Right lobe of liver (tissue), 6 donors: ENCODE measurements at regions of chr7 and their contacts with region 1.

Region 1: GRCh38 chr7:87416682-87417587 is 58.5 kb downstream of the ABCB4 start:
- DNase-seq: no peak
- ATAC-seq: peak; percentile 62 to 82 (median 74)
- H3K4me3 ChIP-seq: no peak overlapping the region
- H3K27ac ChIP-seq: no peak overlapping the region
- H3K4me1 ChIP-seq: no peaks in the 10 kb centered on the region
- H3K27me3 ChIP-seq: no peaks in the 10 kb centered on the region
- CTCF ChIP-seq: peak; percentile 61 to 70 (median 67)
- POLR2A ChIP-seq: no peak

Region 2: DNA sequence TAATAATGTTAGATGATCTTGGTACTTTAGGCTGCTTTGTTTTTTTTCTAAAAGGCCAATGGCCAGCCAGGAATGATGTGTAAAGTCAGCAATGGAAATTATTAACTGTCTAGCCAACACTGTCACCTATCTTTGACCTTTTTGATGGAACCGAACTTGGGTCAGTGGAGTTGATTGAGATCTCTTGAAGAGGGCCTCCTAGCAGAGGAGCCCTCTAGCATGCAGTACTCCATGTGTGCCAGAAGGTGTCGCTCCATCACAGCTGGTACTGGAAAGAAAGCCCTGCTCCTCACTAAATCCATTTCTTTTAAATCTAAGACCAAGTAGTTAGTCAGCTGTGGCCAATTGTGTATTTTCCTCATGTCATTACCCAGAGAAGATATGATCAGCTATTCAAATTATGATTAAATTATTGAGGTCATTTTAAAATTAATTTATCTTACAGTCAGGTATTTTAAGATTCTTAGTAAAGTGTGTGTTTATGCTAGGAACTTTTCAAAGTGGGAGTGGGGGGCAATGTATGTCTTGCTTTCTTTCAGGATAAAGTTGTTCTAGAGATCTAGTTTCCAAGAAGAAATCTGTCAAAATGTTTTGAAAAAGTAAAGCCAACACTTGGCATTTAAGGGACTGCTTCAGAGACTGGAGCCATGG is 104.6 kb before region 1 on chr7:
- intact Hi-C with region 1: loop called (anchors 5 to 10 kb)
- DNase-seq: peak in 2 of 3 donors; percentile 46 to 68
- ATAC-seq: peak; percentile 99 to 100 (median 99)
- H3K4me3 ChIP-seq: no peak overlapping the region
- H3K27ac ChIP-seq: no peak overlapping the region
- H3K4me1 ChIP-seq: no peaks in the 10 kb centered on the region
- H3K27me3 ChIP-seq: no peaks in the 10 kb centered on the region
- CTCF ChIP-seq: peak; percentile 92 to 100 (median 98)
- POLR2A ChIP-seq: no peak